GM12878 (cell line): ENCODE measurements at regions of chr6 and their contacts with region 1.

Region 1: DNA sequence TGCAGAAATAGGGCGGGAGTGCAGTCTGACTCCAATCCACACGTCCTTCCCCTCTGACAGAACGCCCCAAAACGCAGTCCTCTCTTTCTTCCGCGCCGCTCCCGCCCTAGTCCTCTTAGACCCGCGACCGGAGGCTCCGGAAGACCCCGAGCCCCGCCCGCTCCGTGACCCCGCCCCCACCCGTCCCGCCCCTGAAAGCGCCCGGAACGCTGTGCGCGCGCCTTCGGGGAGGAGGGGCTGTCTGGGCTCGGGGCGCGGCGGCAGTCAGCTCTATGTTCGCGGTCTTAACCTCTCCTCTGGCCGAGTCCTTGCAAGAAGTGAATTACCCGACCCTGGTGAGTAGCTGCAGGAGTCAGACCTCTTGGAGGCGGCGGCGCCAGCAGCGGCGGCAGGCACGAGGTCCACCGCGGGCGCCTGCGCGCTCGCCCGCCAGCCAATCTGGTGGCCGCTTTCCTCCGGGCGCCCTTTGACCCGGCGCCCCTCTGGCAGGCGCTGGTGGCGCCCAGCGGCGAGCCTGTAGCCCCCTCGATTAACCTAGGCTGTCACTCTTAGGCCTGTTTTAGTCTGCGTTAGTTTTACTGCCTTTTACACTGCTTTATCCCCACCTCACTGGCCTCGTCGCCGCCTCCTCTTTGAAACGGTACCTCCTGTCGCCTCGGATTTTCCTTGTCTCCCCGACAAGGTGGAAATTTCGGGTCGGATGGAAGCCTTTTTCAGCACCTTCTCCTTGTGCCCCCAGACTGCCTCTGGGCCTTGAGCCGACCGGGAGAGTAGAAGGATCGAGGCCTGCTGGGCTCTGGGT is at the start of gene MANEA:
- DNase-seq: peak; percentile 46
- ATAC-seq: peak; percentile 88
- H3K4me3 ChIP-seq: peak within 1 kb of the TSS; percentile 92
- H3K27ac ChIP-seq: peak within 1 kb of the TSS; percentile 93
- H3K4me1 ChIP-seq: no peaks in the 10 kb centered on the region; the same call in 1 of the 2 replicates
- H3K27me3 ChIP-seq: no peaks in the 10 kb centered on the region
- CTCF ChIP-seq: no peak
- EP300 ChIP-seq: no peak
- POLR2A ChIP-seq: peak; percentile 87
- RAD21 ChIP-seq: no peak
- polyA plus RNA-seq, gene MANEA: 5.8 to 6.4 TPM

Region 2: GRCh38 chr6:95230071-95230740 is 347.3 kb before region 1 on chr6:
- CTCF ChIA-PET with region 1: no interaction called
- POLR2A ChIA-PET with region 1: no interaction called
- RAD21 ChIA-PET with region 1: no interaction called
- SMC1A ChIA-PET with region 1: no interaction called
- in situ Hi-C with region 1: no loop called
- intact Hi-C with region 1: no loop called
- DNase-seq: no peak
- ATAC-seq: no peak
- H3K4me3 ChIP-seq: no peak overlapping the region
- H3K27ac ChIP-seq: no peak overlapping the region
- H3K4me1 ChIP-seq: no peaks in the 10 kb centered on the region
- H3K27me3 ChIP-seq: no peaks in the 10 kb centered on the region
- CTCF ChIP-seq: no peak
- EP300 ChIP-seq: no peak
- POLR2A ChIP-seq: no peak
- RAD21 ChIP-seq: no peak

Region 3: GRCh38 chr6:95318137-95318536 is 259.4 kb before region 1 on chr6:
- CTCF ChIA-PET with region 1: no interaction called
- POLR2A ChIA-PET with region 1: no interaction called
- RAD21 ChIA-PET with region 1: no interaction called
- SMC1A ChIA-PET with region 1: no interaction called
- in situ Hi-C with region 1: no loop called
- intact Hi-C with region 1: no loop called
- DNase-seq: no peak
- ATAC-seq: no peak
- H3K4me3 ChIP-seq: no peak overlapping the region
- H3K27ac ChIP-seq: no peak overlapping the region
- H3K4me1 ChIP-seq: no peaks in the 10 kb centered on the region
- H3K27me3 ChIP-seq: no peaks in the 10 kb centered on the region
- CTCF ChIP-seq: no peak
- EP300 ChIP-seq: no peak
- POLR2A ChIP-seq: no peak
- RAD21 ChIP-seq: no peak

Region 4: GRCh38 chr6:95587989-95588388 is 10.5 kb after region 1 on chr6:
- CTCF ChIA-PET with region 1: interaction called, 5 read pairs
- POLR2A ChIA-PET with region 1: interaction called, 13 read pairs
- RAD21 ChIA-PET with region 1: interaction called, 6 read pairs
- SMC1A ChIA-PET with region 1: interaction called, 7 read pairs
- in situ Hi-C with region 1: no loop called
- intact Hi-C with region 1: no loop called
- DNase-seq: no peak
- ATAC-seq: peak; percentile 66
- H3K4me3 ChIP-seq: peak overlapping the region; percentile 48; the same call in 1 of the 2 replicates
- H3K27ac ChIP-seq: peak overlapping the region; percentile 15; the same call in 1 of the 2 replicates
- H3K4me1 ChIP-seq: no peaks in the 10 kb centered on the region
- H3K27me3 ChIP-seq: no peaks in the 10 kb centered on the region
- CTCF ChIP-seq: no peak
- EP300 ChIP-seq: no peak
- POLR2A ChIP-seq: no peak
- RAD21 ChIP-seq: no peak

Region 5: DNA sequence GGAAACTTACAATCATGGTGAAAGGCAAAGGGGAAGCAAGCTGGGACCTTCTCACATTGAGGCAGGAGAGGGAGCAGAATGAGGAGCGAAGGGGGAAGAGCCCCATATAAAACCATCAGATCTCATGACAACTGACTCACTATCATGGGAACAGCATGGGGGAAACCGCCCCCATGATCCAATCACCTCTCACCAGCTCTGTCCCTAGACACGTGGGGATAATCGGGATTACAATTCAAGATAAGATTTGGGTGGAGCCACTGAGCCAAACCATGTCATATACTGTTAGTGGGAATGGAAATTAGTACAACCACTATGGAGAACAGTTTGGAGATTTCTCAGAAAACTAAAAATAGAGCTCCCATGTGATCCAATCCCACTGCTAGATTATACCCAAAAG is 163.5 kb after region 1 on chr6:
- CTCF ChIA-PET with region 1: no interaction called
- POLR2A ChIA-PET with region 1: no interaction called
- RAD21 ChIA-PET with region 1: no interaction called
- SMC1A ChIA-PET with region 1: no interaction called
- in situ Hi-C with region 1: no loop called
- intact Hi-C with region 1: no loop called
- DNase-seq: no peak
- ATAC-seq: no peak
- H3K4me3 ChIP-seq: no peak overlapping the region
- H3K27ac ChIP-seq: no peak overlapping the region
- H3K4me1 ChIP-seq: no peaks in the 10 kb centered on the region
- H3K27me3 ChIP-seq: no peaks in the 10 kb centered on the region
- CTCF ChIP-seq: no peak
- EP300 ChIP-seq: no peak
- POLR2A ChIP-seq: no peak
- RAD21 ChIP-seq: no peak

Region 6: DNA sequence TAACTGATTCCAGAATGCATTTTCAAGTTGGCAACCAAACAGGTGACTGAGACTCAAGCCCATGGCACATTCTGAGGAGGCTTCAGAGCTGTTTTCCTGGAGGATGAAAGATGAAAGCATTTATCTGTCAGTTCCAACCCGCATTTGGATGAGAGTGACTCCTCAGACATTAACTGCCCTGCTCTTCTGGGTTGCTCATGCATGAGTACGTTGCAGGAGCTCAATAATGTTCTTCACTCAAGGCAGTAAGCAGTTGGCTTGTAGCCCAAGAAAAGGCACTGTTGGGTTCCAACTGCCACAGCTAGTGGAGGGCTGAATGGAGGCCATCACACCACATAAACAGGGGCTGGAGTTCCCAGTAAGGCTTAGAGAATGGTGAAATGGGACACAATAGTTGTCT is 593.6 kb after region 1 on chr6:
- CTCF ChIA-PET with region 1: no interaction called
- POLR2A ChIA-PET with region 1: no interaction called
- RAD21 ChIA-PET with region 1: no interaction called
- SMC1A ChIA-PET with region 1: no interaction called
- in situ Hi-C with region 1: no loop called
- intact Hi-C with region 1: no loop called
- DNase-seq: no peak
- ATAC-seq: no peak
- H3K4me3 ChIP-seq: no peak overlapping the region
- H3K27ac ChIP-seq: no peak overlapping the region
- H3K4me1 ChIP-seq: no peaks in the 10 kb centered on the region
- H3K27me3 ChIP-seq: no peaks in the 10 kb centered on the region
- CTCF ChIP-seq: no peak
- EP300 ChIP-seq: no peak
- POLR2A ChIP-seq: no peak
- RAD21 ChIP-seq: no peak